HepG2 (cell line): ENCODE measurements at regions of chr15 and their contacts with region 1.

Region 1: GRCh38 chr15:22913646-22914380 is 66.4 kb downstream of the CYFIP1 start:
- DNase-seq: no peak
- ATAC-seq: peak; percentile 69
- H3K4me3 ChIP-seq: no peak overlapping the region
- H3K27ac ChIP-seq: no peak overlapping the region
- H3K4me1 ChIP-seq: no peaks in the 10 kb centered on the region
- H3K27me3 ChIP-seq: no peaks in the 10 kb centered on the region
- CTCF ChIP-seq: no peak
- EP300 ChIP-seq: no peak
- POLR2A ChIP-seq: no peak
- RAD21 ChIP-seq: no peak

Region 2: DNA sequence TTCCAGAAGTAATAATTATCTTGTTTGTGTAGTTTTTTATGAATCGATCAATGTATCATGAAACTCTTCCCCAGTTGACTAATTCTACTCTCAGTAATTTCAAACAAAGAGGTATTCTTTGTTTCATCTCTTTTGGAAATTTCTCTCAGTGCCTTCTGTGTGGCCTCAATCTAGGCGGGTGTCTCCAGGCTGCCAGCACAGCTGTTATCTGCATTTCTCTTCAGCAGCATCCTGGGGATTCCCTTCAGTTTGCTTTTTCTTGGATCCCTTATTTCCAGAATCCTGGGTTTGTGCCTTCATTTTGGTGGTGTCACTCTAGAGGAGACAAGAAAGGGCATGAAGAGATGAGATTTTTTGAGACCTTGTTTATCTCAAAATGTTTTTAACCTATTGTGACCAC is 52.7 kb before region 1 on chr15:
- CTCF ChIA-PET with region 1: no interaction called
- POLR2A ChIA-PET with region 1: no interaction called
- in situ Hi-C with region 1: loop called (anchors 5 kb)
- intact Hi-C with region 1: no loop called
- DNase-seq: no peak
- ATAC-seq: no peak
- H3K4me3 ChIP-seq: no peak overlapping the region
- H3K27ac ChIP-seq: no peak overlapping the region
- H3K4me1 ChIP-seq: no peaks in the 10 kb centered on the region
- H3K27me3 ChIP-seq: no peaks in the 10 kb centered on the region
- CTCF ChIP-seq: no peak
- EP300 ChIP-seq: no peak
- POLR2A ChIP-seq: no peak
- RAD21 ChIP-seq: no peak